ENCODE measurements at regions of chr6 and their contacts with region 1.

Region 1: GRCh38 chr6:90296346-90297114 is at the start of gene BACH2:
- H3K4me3 Mint-ChIP-seq: peak within 1 kb of the TSS; percentile 80
- H3K27ac Mint-ChIP-seq: no peak within 1 kb of the TSS
- H3K4me1 Mint-ChIP-seq: peaks cover 4% of the 10 kb centered on the region
- H3K27me3 Mint-ChIP-seq: peaks cover 75% of the 10 kb centered on the region

Region 2: DNA sequence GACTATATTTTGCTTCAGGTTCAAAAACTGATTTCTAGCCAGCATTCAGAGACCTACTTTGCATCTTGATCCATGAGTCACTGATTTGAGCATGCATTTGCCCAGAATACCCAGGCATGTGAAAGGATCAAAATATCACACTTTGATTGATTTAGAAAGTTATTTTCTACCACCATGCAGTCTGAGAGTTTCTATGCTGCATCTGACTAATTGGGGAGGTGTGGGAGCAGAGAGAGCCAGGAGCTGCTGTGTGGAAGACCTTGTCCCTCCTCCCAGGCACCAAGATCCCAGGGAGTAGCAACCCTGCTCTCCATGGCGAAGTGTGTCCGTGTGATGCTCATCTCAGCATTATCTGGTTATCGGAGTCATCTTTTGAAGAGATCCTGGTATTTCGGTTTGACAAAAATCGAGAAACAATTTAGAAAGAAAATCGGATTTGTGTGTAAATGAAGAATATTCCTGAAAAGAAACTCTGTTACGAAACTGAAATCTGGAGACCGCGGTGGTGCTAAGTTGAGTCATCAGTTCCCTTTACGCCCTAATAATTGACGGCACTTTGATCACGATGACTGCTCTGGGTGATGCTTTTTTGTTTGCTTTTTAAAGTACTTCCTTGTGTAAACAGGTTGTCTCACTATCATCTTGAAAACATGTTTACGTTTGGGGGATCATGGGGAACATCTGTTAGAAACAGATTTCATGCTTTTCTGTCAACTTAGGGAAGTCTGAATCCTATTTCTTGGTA is 193.3 kb before region 1 on chr6:
- intact Hi-C with region 1: loop called (anchors 5 kb)
- H3K4me3 Mint-ChIP-seq: no peak overlapping the region
- H3K27ac Mint-ChIP-seq: no peak overlapping the region
- H3K4me1 Mint-ChIP-seq: peaks cover 34% of the 10 kb centered on the region
- H3K27me3 Mint-ChIP-seq: peaks cover 34% of the 10 kb centered on the region

Region 3: GRCh38 chr6:91117550-91117949 is 821.0 kb after region 1 on chr6:
- intact Hi-C with region 1: no loop called
- H3K4me3 Mint-ChIP-seq: no peak overlapping the region
- H3K27ac Mint-ChIP-seq: no peak overlapping the region
- H3K4me1 Mint-ChIP-seq: no peaks in the 10 kb centered on the region
- H3K27me3 Mint-ChIP-seq: no peaks in the 10 kb centered on the region